ENCODE measurements at regions of chr2 and their contacts with region 1.

Region 1: DNA sequence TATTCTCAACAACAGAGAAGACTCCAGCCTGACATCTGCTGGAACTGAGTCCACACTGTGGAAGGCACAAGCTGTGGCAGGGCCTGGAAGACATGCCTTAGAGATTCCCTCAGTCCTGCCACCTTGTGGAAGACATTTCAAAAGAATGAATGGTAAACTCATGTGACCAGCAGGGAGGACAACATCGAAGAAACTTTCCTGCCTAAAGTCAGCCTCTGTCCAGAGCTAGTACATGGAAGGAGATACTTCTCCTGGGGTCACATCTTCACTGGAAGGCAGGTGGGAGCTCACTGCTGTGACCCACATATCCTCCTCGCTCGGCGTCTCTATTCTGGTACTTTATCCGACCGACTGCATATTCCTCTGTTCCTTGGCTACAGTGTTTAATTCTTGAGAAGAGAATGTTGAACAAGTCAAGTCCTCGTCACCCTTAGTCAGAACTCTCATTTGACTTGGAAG is 59.5 kb downstream of the PUM2 start:
- DNase-seq: peak; percentile 79
- H3K4me3 ChIP-seq: no peak overlapping the region
- H3K27ac ChIP-seq: peak overlapping the region; percentile 37 to 64
- H3K4me1 ChIP-seq: peaks cover 0 to 7% of the 10 kb centered on the region in 2 experiments; a peak in 2 of 4 replicates
- H3K27me3 ChIP-seq: no peaks in the 10 kb centered on the region
- CTCF ChIP-seq: peak; percentile 89
- EP300 ChIP-seq: no peak
- RAD21 ChIP-seq: peak; percentile 74

Region 2: DNA sequence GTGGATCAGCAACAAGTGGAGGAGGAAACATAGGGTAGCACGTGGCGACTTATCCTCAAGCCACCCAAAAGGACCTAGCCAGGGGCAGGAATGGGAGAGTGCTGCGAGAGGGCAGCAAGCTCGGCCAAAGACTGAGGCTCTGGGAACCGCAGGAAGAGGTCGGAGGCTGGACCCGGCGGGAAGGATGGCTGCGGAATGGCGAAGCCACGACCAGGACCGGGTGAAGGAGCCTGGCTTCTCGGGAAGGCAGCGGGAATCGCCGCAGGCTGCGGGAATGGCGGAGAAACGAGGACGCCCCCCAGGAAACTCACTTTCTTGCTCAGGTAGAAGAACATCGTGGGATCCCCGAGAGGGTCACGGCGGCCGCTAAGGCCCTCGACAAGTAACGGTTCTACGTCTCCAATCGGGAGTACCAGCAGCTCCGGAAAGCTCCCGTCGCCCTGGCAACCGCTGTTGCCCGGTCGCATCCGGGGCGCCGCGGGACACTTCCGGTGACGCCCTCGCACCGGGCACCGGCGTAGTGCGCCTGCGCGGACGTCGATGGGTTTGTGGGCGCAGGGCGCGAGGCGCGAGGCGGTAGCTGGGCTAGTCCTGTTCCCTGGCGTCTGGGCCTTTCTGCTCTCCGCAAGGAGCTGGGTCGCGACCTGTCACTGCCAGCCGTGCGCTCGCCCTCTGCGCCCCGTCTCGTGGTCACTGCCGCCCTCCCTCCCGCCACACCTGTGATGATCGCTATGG is 301.3 kb before region 1 on chr2 and contains the start of gene WDR35:
- CTCF ChIA-PET with region 1: no interaction called
- POLR2A ChIA-PET with region 1: no interaction called
- DNase-seq: peak; percentile 100
- H3K4me3 ChIP-seq: peak within 1 kb of the TSS; percentile 84 to 100
- H3K27ac ChIP-seq: peak within 1 kb of the TSS; percentile 79 to 95
- H3K4me1 ChIP-seq: peaks cover 14 to 27% of the 10 kb centered on the region in 2 experiments; a peak in 3 of 4 replicates
- H3K27me3 ChIP-seq: no peaks in the 10 kb centered on the region
- CTCF ChIP-seq: no peak
- EP300 ChIP-seq: no peak
- RAD21 ChIP-seq: no peak
- polyA plus RNA-seq, gene WDR35: 8.6 and 12.1 TPM in 2 replicates

Region 3: GRCh38 chr2:20106746-20107145 is 184.4 kb before region 1 on chr2:
- CTCF ChIA-PET with region 1: interaction called, 17 read pairs
- POLR2A ChIA-PET with region 1: no interaction called
- DNase-seq: no peak
- H3K4me3 ChIP-seq: no peak overlapping the region
- H3K27ac ChIP-seq: no peak overlapping the region
- H3K4me1 ChIP-seq: no peaks in the 10 kb centered on the region; a peak in 1 of 4 replicates
- H3K27me3 ChIP-seq: no peaks in the 10 kb centered on the region
- CTCF ChIP-seq: peak; percentile 20; the same call in 1 of the 2 replicates
- EP300 ChIP-seq: no peak
- RAD21 ChIP-seq: no peak

Region 4: GRCh38 chr2:20267529-20267928 is 23.6 kb before region 1 on chr2:
- CTCF ChIA-PET with region 1: interaction called, 11 read pairs
- POLR2A ChIA-PET with region 1: no interaction called
- DNase-seq: no peak
- H3K4me3 ChIP-seq: no peak overlapping the region
- H3K27ac ChIP-seq: no peak overlapping the region
- H3K4me1 ChIP-seq: no peaks in the 10 kb centered on the region; a peak in 1 of 4 replicates
- H3K27me3 ChIP-seq: no peaks in the 10 kb centered on the region
- CTCF ChIP-seq: no peak
- EP300 ChIP-seq: no peak
- RAD21 ChIP-seq: no peak

Region 5: DNA sequence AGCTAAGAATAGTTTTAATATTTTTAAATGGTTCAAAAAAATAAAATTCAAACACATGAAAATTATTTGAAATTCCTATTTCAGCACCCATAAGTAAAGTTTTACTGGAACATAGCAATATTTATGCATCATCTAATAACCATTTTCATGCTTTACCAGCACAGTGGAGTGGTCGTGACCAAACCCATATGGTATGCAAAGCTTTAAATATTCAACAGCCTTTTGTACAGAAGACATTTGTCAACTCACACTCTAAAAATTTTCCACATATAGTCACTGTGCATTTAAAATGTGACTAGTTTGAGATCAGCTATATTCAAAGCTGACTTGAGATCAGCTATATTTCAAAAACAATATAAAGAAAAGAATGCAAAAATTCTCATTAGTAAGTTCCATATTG is 13.3 kb after region 1 on chr2:
- CTCF ChIA-PET with region 1: interaction called, 19 read pairs
- POLR2A ChIA-PET with region 1: no interaction called
- DNase-seq: no peak
- H3K4me3 ChIP-seq: no peak overlapping the region
- H3K27ac ChIP-seq: peak overlapping the region in 1 of 2 experiments; percentile 49; a peak in 2 of 4 replicates
- H3K4me1 ChIP-seq: peaks cover 6 to 33% of the 10 kb centered on the region in 2 experiments; a peak in 3 of 4 replicates
- H3K27me3 ChIP-seq: no peaks in the 10 kb centered on the region
- CTCF ChIP-seq: no peak
- EP300 ChIP-seq: peak in 1 of 2 experiments; percentile 56; a peak in 1 of 4 replicates
- RAD21 ChIP-seq: no peak

Region 6: DNA sequence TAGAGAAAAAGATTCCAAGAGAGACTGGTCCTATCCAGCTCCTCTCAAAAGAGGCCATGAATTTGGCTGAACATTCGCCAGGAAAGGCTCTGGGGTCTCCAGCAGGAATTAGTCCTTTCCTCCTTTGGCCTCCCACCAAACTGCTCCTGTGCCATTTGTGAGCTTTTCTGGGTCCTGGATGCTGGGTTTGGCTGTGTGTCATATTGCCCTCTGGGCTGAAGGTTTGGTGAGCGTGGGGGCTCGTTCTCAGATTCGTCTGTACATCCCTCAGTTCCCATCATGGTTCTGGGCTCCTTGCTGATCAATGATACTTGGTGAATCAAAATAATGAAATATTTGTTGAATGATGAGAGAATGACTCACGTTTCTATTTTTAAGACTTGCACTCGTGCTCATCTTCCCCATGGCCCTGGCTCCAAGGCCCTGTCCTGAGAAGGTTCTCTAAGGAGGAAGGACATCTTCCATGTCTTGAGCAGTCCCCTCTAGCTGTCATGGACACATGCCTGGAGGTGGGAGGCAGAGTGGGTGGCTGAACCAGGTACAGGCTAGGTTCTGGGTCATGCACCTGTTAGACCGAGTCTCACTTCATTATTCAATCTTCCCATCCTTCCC is 107.9 kb after region 1 on chr2:
- CTCF ChIA-PET with region 1: no interaction called
- POLR2A ChIA-PET with region 1: no interaction called
- DNase-seq: no peak
- H3K4me3 ChIP-seq: no peak overlapping the region
- H3K27ac ChIP-seq: no peak overlapping the region
- H3K4me1 ChIP-seq: no peaks in the 10 kb centered on the region; a peak in 1 of 4 replicates
- H3K27me3 ChIP-seq: no peaks in the 10 kb centered on the region
- CTCF ChIP-seq: no peak
- EP300 ChIP-seq: no peak
- RAD21 ChIP-seq: no peak